Spleen (tissue), 13 donors: ENCODE measurements at regions of chr6 and their contacts with region 1.

Region 1: DNA sequence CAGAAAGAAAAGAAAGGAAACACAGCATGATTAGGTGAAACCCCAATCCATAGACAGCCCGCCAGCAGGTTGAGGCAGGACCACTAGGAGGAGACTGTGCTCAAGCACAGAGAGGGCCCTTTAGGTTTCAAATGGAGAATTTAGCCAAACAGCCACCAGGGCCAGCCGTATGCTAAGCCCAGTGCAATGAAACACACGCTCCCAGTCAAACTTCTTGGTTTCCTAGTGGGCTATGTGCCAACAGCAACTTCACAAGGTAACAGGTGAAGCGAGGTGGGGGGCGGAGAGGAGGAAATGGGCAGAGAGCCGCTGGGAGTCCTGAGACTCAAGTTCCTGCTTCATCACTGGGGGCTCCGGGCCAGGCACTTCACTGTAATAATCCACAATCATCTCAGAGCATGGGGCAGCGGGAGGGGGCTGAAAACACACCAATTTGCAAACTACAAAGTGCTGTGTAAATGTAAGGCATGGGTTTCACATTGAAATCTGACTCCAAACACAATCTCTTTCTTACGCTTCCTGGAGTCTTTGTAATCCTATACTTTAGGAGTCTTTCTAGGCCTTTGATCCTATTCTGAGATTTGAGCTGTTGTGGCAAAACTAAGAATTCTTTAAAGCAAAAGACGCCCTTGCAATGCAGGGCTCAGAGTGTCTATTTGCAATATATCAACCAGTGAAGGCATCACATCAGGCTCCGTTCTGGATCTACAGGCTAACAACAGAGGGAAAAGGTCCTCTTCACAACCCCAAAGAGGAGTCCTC is 117.3 kb downstream of the OPRM1 start:
- DNase-seq: peak; percentile 83
- H3K4me3 ChIP-seq: peak overlapping the region in 1 of 8 donors; percentile 33
- H3K27ac ChIP-seq: peak overlapping the region in 7 of 8 donors; percentile 47 to 80 (median 60)
- H3K4me1 ChIP-seq: peaks cover 14 to 62% (median 39%) of the 10 kb centered on the region in 6 donors
- H3K27me3 ChIP-seq: no peaks in the 10 kb centered on the region
- CTCF ChIP-seq: peak; percentile 28 to 76 (median 57)
- POLR2A ChIP-seq: no peak

Region 2: DNA sequence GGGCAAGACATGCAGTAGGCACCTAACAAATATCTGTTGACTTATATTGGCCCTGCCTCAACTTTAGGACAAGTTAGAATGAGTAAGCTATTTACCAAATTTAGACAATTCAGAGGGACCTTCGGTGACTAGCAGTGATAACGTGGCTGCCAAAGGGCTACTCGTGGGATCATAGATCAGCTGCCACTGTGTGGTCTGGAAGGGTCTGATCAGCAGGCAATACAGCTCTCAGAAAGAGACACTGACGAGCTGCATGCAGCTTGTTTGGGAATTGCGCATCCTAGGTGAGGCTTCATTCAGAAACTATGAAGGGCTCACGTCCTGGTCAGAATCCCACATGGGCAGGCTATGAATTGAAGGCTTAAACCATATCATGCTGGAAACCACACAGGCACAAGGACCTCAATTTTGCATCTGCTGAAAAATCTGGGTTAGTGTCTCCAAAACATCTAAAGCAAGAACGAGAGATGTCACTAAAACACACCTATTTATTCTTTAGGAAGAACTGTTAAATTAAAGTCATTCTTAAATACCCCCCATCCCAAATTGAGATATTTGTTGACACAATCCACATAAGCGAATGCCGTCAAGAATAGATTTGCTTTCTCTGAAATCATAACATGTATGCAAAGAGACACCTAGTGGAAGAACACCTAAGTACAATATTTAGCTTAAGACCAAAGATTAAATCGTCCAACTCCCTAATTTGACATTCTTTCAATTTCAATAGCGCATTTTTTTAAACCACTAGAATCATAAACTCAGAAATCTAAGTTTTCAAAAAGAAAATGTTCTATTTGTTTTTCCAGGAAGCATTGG is 120.7 kb after region 1 on chr6:
- intact Hi-C with region 1: loop called (anchors 5 kb)
- DNase-seq: no peak
- H3K4me3 ChIP-seq: peak overlapping the region in 2 of 8 donors; percentile 10 to 48
- H3K27ac ChIP-seq: peak overlapping the region in 1 of 8 donors; percentile 11
- H3K4me1 ChIP-seq: peaks cover 0 to 21% (median 14%) of the 10 kb centered on the region in 6 donors
- H3K27me3 ChIP-seq: no peaks in the 10 kb centered on the region
- CTCF ChIP-seq: peak; percentile 24 to 78 (median 61)
- POLR2A ChIP-seq: no peak

Region 3: DNA sequence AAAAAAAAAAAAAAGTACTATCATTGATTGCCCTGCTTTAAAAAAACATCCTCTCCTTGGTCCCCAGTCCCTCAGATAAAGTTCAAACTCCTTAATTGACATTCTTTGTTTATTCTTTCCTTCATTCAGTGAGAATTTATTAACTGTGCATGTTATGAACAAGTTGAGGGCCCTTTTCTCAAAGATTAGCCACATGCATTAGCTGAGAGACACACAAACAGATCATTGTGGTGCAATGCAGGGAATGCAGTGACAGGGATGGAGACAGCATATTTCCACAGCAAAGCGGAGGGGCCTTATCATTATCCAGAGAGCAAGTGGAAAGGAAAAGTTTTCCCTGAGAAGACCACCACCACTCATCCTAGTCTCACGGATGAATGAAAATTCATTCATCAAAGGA is 222.2 kb after region 1 on chr6:
- intact Hi-C with region 1: loop called (anchors 5 kb)
- DNase-seq: no peak
- H3K4me3 ChIP-seq: no peak overlapping the region
- H3K27ac ChIP-seq: no peak overlapping the region
- H3K4me1 ChIP-seq: no peaks in the 10 kb centered on the region
- H3K27me3 ChIP-seq: no peaks in the 10 kb centered on the region
- CTCF ChIP-seq: no peak
- POLR2A ChIP-seq: no peak